AG04449 (cell line): ENCODE measurements at regions of chr17 and their contacts with region 1.

Region 1: GRCh38 chr17:57121338-57122042 is 36.4 kb downstream of the AKAP1 start:
- DNase-seq: peak; percentile 4
- H3K4me3 ChIP-seq: no peak overlapping the region
- CTCF ChIP-seq: peak; percentile 64

Region 2: GRCh38 chr17:57106107-57106835 is 15.2 kb before region 1 on chr17:
- CTCF ChIA-PET with region 1: interaction called, 56 read pairs
- POLR2A ChIA-PET with region 1: no interaction called
- DNase-seq: no peak
- H3K4me3 ChIP-seq: no peak overlapping the region
- CTCF ChIP-seq: no peak